ENCODE measurements at regions of chr2 and their contacts with region 1.

Region 1: DNA sequence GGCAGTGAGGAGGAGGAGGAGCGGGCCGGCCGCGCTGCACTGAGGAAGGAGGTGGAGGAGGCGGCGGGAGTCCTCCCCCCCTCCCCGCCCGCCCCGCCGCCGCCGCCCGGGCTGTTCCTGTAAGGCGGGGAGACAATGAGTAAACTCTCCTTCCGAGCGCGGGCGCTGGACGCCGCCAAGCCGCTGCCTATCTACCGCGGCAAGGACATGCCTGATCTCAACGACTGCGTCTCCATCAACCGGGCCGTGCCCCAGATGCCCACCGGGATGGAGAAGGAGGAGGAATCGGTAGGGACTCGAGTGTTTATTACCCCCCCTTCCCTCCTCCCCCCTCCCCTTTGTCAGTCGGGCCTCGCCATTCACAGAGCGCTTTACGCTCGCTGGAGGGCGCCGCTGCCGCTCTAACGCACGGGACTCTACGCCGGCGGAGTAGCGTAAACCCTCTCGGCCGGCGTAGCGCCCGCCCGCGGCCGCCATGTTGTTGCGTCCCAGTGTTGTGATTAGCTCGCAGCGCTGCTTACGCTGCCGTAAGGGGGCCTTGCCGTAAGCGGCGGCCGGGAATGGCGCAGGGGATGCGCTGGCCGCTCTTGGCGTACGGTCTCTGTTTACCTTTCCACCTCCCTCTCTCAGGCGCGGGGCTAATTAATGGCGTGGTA is 460 bp downstream of the EPC2 start:
- DNase-seq: peak; percentile 95
- ATAC-seq: peak; percentile 82
- H3K4me3 Mint-ChIP-seq: peak overlapping the region; percentile 89
- H3K27ac Mint-ChIP-seq: peak overlapping the region; percentile 99
- H3K4me1 Mint-ChIP-seq: peaks cover 46% of the 10 kb centered on the region
- H3K27me3 Mint-ChIP-seq: no peaks in the 10 kb centered on the region
- CTCF ChIP-seq: no peak

Region 2: DNA sequence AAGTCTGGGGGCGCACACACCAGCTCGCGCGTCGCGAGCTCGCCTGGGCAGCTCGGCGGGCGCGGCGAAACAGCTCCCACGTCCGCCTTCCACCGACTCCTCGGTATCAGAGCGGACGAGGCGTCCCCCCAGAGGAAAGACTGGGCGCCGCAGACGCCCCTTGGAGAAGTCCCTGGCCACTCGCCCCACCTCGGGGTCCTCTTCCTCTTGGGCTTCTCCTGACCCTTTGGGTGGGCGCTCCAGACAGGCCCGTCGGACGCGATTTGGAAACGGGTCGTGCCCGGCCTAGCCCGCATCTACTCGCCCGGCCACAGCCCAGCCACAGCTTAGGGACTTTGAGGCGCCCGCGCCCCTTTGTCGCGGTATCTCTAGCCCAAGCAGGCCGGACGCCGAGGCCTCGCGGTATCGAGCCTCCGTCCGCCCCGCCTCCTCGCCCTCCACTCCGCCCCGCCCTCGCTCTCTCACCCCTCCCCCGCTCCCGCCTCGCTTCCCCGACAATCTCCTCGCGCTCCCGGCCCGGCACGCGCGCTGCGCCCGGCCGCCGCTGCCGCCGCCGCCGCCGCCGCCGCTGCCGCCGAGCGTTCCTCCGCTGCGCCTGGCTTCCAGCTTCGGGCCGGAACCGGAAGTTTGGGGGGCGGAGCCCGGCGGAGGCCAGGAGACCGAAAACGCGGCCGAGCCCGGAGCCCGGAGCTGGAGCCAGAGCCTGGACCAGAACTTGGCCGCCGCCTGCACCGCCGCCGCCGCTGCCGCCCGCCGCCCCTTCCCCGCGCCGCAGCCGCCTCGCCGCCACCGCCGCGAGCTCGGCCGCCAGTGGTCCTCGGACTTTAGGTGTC is 800.9 kb before region 1 on chr2:
- CTCF ChIA-PET with region 1: no interaction called
- POLR2A ChIA-PET with region 1: no interaction called
- intact Hi-C with region 1: loop called (anchors 5 kb)
- DNase-seq: peak; percentile 88
- ATAC-seq: peak; percentile 83
- H3K4me3 Mint-ChIP-seq: peak overlapping the region; percentile 88
- H3K27ac Mint-ChIP-seq: peak overlapping the region; percentile 80
- H3K4me1 Mint-ChIP-seq: peaks cover 29% of the 10 kb centered on the region
- H3K27me3 Mint-ChIP-seq: peaks cover 31% of the 10 kb centered on the region
- CTCF ChIP-seq: no peak

Region 3: GRCh38 chr2:148509288-148509902 is 135.6 kb before region 1 on chr2:
- CTCF ChIA-PET with region 1: no interaction called
- POLR2A ChIA-PET with region 1: no interaction called
- intact Hi-C with region 1: loop called (anchors 5 kb)
- DNase-seq: peak; percentile 63
- ATAC-seq: peak; percentile 100
- H3K4me3 Mint-ChIP-seq: peak overlapping the region; percentile 70
- H3K27ac Mint-ChIP-seq: peak overlapping the region; percentile 32
- H3K4me1 Mint-ChIP-seq: peaks cover 12% of the 10 kb centered on the region
- H3K27me3 Mint-ChIP-seq: no peaks in the 10 kb centered on the region
- CTCF ChIP-seq: peak; percentile 43

Region 4: DNA sequence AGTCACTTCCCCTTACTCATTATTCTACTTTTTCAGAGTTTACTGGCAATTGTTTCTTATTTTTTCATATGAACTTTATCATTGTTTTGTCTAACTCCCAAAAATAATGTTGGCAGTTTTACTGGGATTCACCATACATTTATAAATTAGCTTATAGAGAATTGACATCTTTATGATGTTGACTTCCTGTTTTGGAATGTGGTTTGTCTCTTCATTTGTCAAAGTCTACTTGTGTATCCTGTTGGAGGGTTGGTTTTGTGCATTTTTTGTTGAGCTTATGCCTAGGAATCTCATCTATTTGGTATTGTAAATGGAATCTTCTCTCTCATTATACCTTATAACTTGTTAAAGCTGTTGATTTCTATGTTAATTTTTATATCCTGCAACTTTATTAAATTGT is 16.0 kb after region 1 on chr2:
- CTCF ChIA-PET with region 1: no interaction called
- POLR2A ChIA-PET with region 1: interaction called, 12 read pairs
- intact Hi-C with region 1: loop called (anchors 1 kb)
- DNase-seq: no peak
- ATAC-seq: no peak
- H3K4me3 Mint-ChIP-seq: no peak overlapping the region
- H3K27ac Mint-ChIP-seq: no peak overlapping the region
- H3K4me1 Mint-ChIP-seq: peaks cover 67% of the 10 kb centered on the region
- H3K27me3 Mint-ChIP-seq: no peaks in the 10 kb centered on the region
- CTCF ChIP-seq: no peak

Region 5: GRCh38 chr2:148745151-148745851 is 100.3 kb after region 1 on chr2:
- CTCF ChIA-PET with region 1: no interaction called
- POLR2A ChIA-PET with region 1: interaction called, 19 read pairs
- intact Hi-C with region 1: no loop called
- DNase-seq: no peak
- ATAC-seq: no peak
- H3K4me3 Mint-ChIP-seq: no peak overlapping the region
- H3K27ac Mint-ChIP-seq: no peak overlapping the region
- H3K4me1 Mint-ChIP-seq: peaks cover 24% of the 10 kb centered on the region
- H3K27me3 Mint-ChIP-seq: no peaks in the 10 kb centered on the region
- CTCF ChIP-seq: no peak

Region 6: GRCh38 chr2:149587220-149587949 is 942.4 kb after region 1 on chr2 and contains the start of gene MMADHC:
- CTCF ChIA-PET with region 1: no interaction called
- POLR2A ChIA-PET with region 1: no interaction called
- intact Hi-C with region 1: loop called (anchors 2 kb)
- DNase-seq: peak; percentile 82
- ATAC-seq: peak; percentile 97
- H3K4me3 Mint-ChIP-seq: peak within 1 kb of the TSS; percentile 99
- H3K27ac Mint-ChIP-seq: peak within 1 kb of the TSS; percentile 97
- H3K4me1 Mint-ChIP-seq: peaks cover 51% of the 10 kb centered on the region
- H3K27me3 Mint-ChIP-seq: peaks cover 6% of the 10 kb centered on the region
- CTCF ChIP-seq: no peak
- total RNA-seq, gene MMADHC: 69.6 and 72.0 TPM in 2 replicates